ENCODE measurements at regions of chr5 and their contacts with region 1.

Region 1: DNA sequence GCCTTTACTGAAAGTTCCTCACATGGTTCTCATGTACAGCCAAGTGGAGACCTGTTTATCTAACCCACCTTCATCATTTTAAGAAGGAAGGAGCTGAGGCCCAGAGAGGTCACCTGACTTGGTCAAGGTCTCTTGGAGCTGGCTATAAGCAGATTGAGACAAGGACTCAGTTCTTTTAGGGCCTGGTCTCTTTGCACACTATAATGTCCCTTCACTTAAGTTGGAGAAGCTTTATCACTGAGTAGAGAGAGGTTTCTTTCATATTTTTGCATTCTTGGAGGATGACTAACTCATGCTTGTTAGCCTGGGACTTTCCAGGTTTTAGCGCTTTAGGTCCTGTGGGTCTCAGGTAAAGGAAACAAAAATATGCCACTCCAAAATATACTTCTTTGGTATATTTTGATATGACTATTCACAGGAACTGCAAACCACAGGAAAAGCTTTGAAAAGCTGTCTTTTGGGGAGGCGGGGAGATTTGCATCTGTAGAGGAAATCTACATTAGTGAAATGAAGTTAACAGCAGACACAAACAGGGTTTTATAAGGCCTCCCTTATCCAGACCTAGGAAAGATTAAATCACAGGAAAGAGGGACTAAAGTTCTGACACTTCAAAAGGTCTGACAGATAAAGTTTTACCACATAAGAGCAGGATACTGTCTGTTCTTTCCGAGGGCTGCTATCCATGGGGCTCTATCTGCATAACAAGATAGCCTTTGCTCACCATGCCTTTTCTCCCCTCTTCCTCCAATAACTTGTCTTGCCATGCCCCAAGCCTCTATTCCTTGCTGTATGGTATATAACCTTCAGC is 95.8 kb upstream of the ANKRD55 start:
- DNase-seq: peak in 8 of 9 donors; percentile 22 to 75 (median 54)
- ATAC-seq: peak; percentile 88
- H3K4me3 ChIP-seq: peak overlapping the region; percentile 40
- H3K4me3 Mint-ChIP-seq: peak overlapping the region in 9 of 10 donors; percentile 15 to 81 (median 70)
- H3K27ac ChIP-seq: peak overlapping the region; percentile 69
- H3K27ac Mint-ChIP-seq: peak overlapping the region; percentile 46 to 95 (median 83)
- H3K4me1 ChIP-seq: peaks cover 22 to 49% of the 10 kb centered on the region in 2 donors
- H3K4me1 Mint-ChIP-seq: peaks cover 33 to 86% (median 72%) of the 10 kb centered on the region in 7 donors
- H3K27me3 ChIP-seq: no peaks in the 10 kb centered on the region
- H3K27me3 Mint-ChIP-seq: no peaks in the 10 kb centered on the region

Region 2: DNA sequence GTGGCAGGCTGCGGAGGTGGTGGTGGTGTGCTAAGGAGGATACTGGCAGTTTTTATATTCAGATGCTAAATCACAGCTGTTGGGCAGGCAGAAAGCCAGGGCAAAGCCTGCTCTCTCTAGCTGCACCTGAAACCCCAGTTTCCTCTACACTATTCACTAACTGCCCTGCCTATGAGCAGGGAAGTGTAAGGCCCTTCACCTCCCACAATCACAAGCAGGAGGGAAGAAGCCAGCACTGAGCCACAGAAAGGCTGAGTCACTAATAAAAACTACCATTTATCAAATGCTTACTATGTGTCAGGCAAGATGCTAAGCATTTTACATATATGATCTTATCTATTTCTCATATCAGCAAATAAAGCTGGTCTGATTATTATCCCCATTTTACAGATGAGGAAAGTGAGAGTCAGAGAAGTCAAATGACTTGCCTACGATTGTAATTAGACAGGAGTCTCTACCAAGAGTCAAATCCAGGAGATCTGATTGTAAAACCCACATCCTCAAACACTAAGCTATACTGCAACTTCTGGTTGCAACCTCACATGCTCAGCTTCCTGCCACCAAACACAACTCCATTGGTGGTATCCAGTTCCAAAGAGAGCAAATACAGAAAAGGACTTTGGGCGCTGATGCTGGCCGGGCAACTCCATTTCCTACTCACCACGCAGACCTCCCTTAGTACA is 316.5 kb before region 1 on chr5:
- CTCF ChIA-PET with region 1: no interaction called
- POLR2A ChIA-PET with region 1: interaction called, 3 read pairs
- intact Hi-C with region 1: loop called in 1 of 2 experiments (anchors 5 kb)
- DNase-seq: peak in 7 of 9 donors; percentile 51 to 84 (median 75)
- ATAC-seq: peak; percentile 91
- H3K4me3 ChIP-seq: no peak overlapping the region
- H3K4me3 Mint-ChIP-seq: peak overlapping the region; percentile 13 to 84 (median 66)
- H3K27ac ChIP-seq: peak overlapping the region; percentile 57
- H3K27ac Mint-ChIP-seq: peak overlapping the region; percentile 71 to 96 (median 89)
- H3K4me1 ChIP-seq: peaks cover 26% of the 10 kb centered on the region in 2 donors
- H3K4me1 Mint-ChIP-seq: peaks cover 26 to 52% (median 49%) of the 10 kb centered on the region in 7 donors
- H3K27me3 ChIP-seq: no peaks in the 10 kb centered on the region
- H3K27me3 Mint-ChIP-seq: no peaks in the 10 kb centered on the region

Region 3: DNA sequence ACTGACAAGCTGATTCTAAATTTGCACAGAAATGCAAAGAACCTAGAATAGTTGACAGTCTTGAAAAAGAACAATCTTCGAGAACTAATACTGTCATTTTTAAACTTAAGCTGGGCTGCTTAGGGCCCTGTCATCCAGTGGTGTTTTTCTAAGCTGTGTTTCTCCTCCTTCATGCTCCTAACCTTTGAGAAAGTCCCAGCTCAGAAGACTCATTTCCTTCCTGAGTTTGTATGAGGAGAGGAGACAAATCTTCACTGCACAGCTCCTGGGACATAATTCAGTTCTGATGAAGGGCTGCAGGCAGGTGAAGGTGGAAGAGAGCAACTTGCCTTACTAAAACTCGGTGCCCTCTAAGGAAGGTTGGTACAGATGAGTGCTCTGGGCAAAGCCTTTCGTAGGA is 13.7 kb after region 1 on chr5:
- CTCF ChIA-PET with region 1: no interaction called
- POLR2A ChIA-PET with region 1: interaction called, 7 read pairs
- intact Hi-C with region 1: loop called in 1 of 2 experiments (anchors 2 kb)
- DNase-seq: no peak
- ATAC-seq: no peak
- H3K4me3 ChIP-seq: no peak overlapping the region
- H3K4me3 Mint-ChIP-seq: no peak overlapping the region
- H3K27ac ChIP-seq: no peak overlapping the region
- H3K27ac Mint-ChIP-seq: no peak overlapping the region
- H3K4me1 ChIP-seq: no peaks in the 10 kb centered on the region
- H3K4me1 Mint-ChIP-seq: peaks cover 7 to 20% (median 10%) of the 10 kb centered on the region in 7 donors
- H3K27me3 ChIP-seq: no peaks in the 10 kb centered on the region
- H3K27me3 Mint-ChIP-seq: no peaks in the 10 kb centered on the region

Region 4: GRCh38 chr5:56481428-56482357 is 152.7 kb after region 1 on chr5:
- CTCF ChIA-PET with region 1: interaction called, 4 read pairs
- POLR2A ChIA-PET with region 1: no interaction called
- intact Hi-C with region 1: loop called (anchors 2 to 5 kb)
- DNase-seq: peak in 6 of 9 donors; percentile 19 to 44 (median 33)
- ATAC-seq: peak; percentile 12
- H3K4me3 ChIP-seq: peak overlapping the region; percentile 60
- H3K4me3 Mint-ChIP-seq: peak overlapping the region; percentile 80 to 95 (median 90)
- H3K27ac ChIP-seq: peak overlapping the region; percentile 80
- H3K27ac Mint-ChIP-seq: peak overlapping the region; percentile 86 to 95 (median 90)
- H3K4me1 ChIP-seq: peaks cover 0 to 37% of the 10 kb centered on the region in 2 donors
- H3K4me1 Mint-ChIP-seq: peaks cover 19 to 53% (median 45%) of the 10 kb centered on the region in 7 donors
- H3K27me3 ChIP-seq: no peaks in the 10 kb centered on the region
- H3K27me3 Mint-ChIP-seq: no peaks in the 10 kb centered on the region

Region 5: GRCh38 chr5:56670118-56670483 is 341.1 kb after region 1 on chr5:
- CTCF ChIA-PET with region 1: no interaction called
- POLR2A ChIA-PET with region 1: interaction called, 3 read pairs
- intact Hi-C with region 1: loop called in 1 of 2 experiments (anchors 1 kb)
- DNase-seq: peak in 7 of 9 donors; percentile 9 to 68 (median 40)
- ATAC-seq: peak; percentile 89
- H3K4me3 ChIP-seq: peak overlapping the region; percentile 13
- H3K4me3 Mint-ChIP-seq: peak overlapping the region; percentile 55 to 83 (median 70)
- H3K27ac ChIP-seq: peak overlapping the region; percentile 65
- H3K27ac Mint-ChIP-seq: peak overlapping the region; percentile 80 to 95 (median 90)
- H3K4me1 ChIP-seq: peaks cover 0 to 40% of the 10 kb centered on the region in 2 donors
- H3K4me1 Mint-ChIP-seq: peaks cover 35 to 53% (median 45%) of the 10 kb centered on the region in 7 donors
- H3K27me3 ChIP-seq: no peaks in the 10 kb centered on the region
- H3K27me3 Mint-ChIP-seq: peaks cover 0 to 10% (median 0%) of the 10 kb centered on the region in 5 donors

Region 6: DNA sequence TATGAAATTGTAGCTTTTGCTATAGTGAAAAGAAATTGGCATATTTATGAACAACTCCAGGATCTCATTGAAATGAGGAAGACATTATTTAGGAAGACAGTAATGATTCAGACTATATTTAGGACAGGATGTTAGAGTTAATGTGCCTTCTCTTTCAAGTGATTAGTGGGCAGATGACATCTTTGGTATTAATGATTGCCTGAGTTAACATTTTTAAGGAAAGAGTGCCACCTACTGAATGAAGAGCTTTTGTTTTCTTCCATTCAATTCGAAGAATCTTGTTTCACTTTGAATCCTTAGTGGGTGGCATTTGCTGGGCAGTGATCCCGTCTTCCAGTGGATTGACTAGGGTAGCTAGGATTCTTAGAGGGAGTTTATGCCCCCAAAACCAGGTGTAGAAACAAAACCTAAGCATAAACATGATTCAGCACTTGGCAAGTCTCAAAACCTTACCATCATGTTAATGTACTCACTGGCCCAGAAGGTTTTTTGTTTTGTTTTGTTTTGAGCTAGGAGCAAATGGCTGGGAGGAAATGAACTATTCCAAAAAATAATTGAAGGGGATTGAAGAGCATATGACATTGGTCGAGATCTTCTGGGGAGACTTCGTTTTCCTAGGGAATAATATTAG is 509.6 kb after region 1 on chr5:
- CTCF ChIA-PET with region 1: interaction called, 8 read pairs
- POLR2A ChIA-PET with region 1: no interaction called
- intact Hi-C with region 1: loop called in 1 of 2 experiments (anchors 5 kb)
- DNase-seq: peak in 7 of 9 donors; percentile 33 to 61 (median 48)
- ATAC-seq: peak; percentile 75
- H3K4me3 ChIP-seq: no peak overlapping the region
- H3K4me3 Mint-ChIP-seq: peak overlapping the region; percentile 19 to 79 (median 57)
- H3K27ac ChIP-seq: peak overlapping the region; percentile 42
- H3K27ac Mint-ChIP-seq: peak overlapping the region; percentile 8 to 95 (median 78)
- H3K4me1 ChIP-seq: peaks cover 8 to 87% of the 10 kb centered on the region in 2 donors
- H3K4me1 Mint-ChIP-seq: peaks cover 63 to 95% (median 90%) of the 10 kb centered on the region in 7 donors
- H3K27me3 ChIP-seq: no peaks in the 10 kb centered on the region
- H3K27me3 Mint-ChIP-seq: no peaks in the 10 kb centered on the region